MCF 10A (cell line): ENCODE measurements at regions of chr3 and their contacts with region 1.

Region 1: GRCh38 chr3:112437146-112438022 is 61.9 kb downstream of the BTLA start:
- DNase-seq: peak; percentile 63
- H3K4me3 Mint-ChIP-seq: no peak overlapping the region
- H3K27ac Mint-ChIP-seq: no peak overlapping the region
- H3K4me1 Mint-ChIP-seq: no peaks in the 10 kb centered on the region
- H3K27me3 Mint-ChIP-seq: no peaks in the 10 kb centered on the region
- CTCF ChIP-seq: peak; percentile 51

Region 2: GRCh38 chr3:112327371-112327951 is 109.9 kb before region 1 on chr3:
- CTCF ChIA-PET with region 1: interaction called, 10 read pairs
- POLR2A ChIA-PET with region 1: no interaction called
- intact Hi-C with region 1: loop called (anchors 1 kb)
- DNase-seq: peak; percentile 73
- H3K4me3 Mint-ChIP-seq: no peak overlapping the region
- H3K27ac Mint-ChIP-seq: no peak overlapping the region
- H3K4me1 Mint-ChIP-seq: no peaks in the 10 kb centered on the region
- H3K27me3 Mint-ChIP-seq: no peaks in the 10 kb centered on the region
- CTCF ChIP-seq: peak; percentile 54